Left colon (tissue), 2 donors: ENCODE measurements at regions of chr16 and their contacts with region 1.

Region 1: GRCh38 chr16:66735891-66736290 is 15.5 kb downstream of the DYNC1LI2 start:
- DNase-seq: no peak
- ATAC-seq: no peak

Region 2: GRCh38 chr16:66552286-66553177 is 183.4 kb before region 1 on chr16 and contains the start of gene CKLF:
- intact Hi-C with region 1: no loop called
- DNase-seq: peak; percentile 83 to 91
- ATAC-seq: peak; percentile 79
- total RNA-seq, gene CKLF: 27.5 to 31.8 TPM

Region 3: DNA sequence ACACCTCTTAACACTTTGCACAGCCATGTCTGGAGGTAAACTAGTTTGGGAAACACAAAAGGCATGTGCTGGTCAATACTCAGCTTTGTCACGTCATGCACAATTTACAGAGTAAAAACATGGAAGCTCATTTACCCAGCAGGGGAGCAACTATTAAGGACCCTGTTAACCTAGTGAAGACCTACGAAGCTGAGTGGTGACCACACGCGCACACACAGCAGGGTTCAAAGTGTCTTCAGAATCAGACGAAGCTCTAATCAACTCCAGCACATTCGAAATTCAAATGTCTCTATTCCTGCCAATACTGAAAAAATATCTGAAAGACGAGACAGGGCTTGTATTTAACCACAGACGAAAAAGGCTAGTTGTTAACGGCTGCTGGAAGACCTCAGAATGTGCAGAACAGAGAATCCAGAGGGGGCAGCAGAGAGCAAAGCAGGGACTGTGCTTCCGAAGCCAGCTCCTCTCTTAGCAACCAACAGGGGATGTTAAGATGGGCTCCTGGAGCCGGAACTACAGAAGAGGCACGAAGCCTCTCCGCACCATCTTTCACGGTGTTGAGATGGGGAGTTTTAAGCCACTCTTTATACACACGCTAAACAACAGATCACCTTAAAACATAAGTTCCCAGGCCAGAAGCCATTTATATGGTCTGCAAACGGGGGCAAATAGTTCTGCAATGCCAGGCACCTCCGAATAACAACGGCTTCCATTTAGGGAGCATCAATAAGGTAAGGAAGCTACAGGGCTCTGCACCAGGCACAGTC is 85.0 kb before region 1 on chr16:
- intact Hi-C with region 1: loop called in 1 of 2 experiments (anchors 10 kb)
- DNase-seq: peak; percentile 74 to 85
- ATAC-seq: peak; percentile 81

Region 4: GRCh38 chr16:66988197-66988788 is 252.4 kb after region 1 on chr16 and contains the start of gene CES4A:
- intact Hi-C with region 1: no loop called
- DNase-seq: no peak
- ATAC-seq: no peak
- total RNA-seq, gene CES4A: 6.6 to 12.1 TPM